ENCODE measurements at regions of chr13 and their contacts with region 1.

Region 1: GRCh38 chr13:25574437-25575411 is 202.9 kb downstream of the ATP8A2 start:
- DNase-seq: no peak
- ATAC-seq: no peak
- H3K4me3 Mint-ChIP-seq: no peak overlapping the region
- H3K27ac Mint-ChIP-seq: no peak overlapping the region
- H3K4me1 Mint-ChIP-seq: no peaks in the 10 kb centered on the region
- H3K27me3 Mint-ChIP-seq: peaks cover 4% of the 10 kb centered on the region
- CTCF ChIP-seq: no peak

Region 2: DNA sequence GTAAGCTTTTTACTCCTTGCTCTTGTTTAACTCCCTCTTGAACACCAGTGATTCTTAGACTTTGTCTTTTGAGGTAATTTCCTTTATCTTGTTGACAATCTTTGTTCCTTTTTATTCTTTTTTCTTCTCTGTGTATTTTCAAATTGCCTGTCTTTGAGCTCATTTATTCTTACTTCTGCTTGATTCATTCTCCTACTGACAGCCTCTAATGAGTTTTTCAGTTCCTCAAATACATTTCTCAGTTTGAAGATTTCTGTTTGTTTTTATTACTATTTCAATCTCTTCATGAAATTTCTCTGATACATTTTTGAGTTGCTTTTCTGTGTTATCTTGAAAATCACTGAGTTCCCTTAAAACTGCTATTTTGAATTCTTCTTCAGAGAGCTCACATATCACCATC is 48.8 kb before region 1 on chr13:
- CTCF ChIA-PET with region 1: no interaction called
- POLR2A ChIA-PET with region 1: no interaction called
- intact Hi-C with region 1: no loop called
- DNase-seq: no peak
- ATAC-seq: no peak
- H3K4me3 Mint-ChIP-seq: no peak overlapping the region
- H3K27ac Mint-ChIP-seq: no peak overlapping the region
- H3K4me1 Mint-ChIP-seq: no peaks in the 10 kb centered on the region
- H3K27me3 Mint-ChIP-seq: peaks cover 2% of the 10 kb centered on the region
- CTCF ChIP-seq: no peak

Region 3: DNA sequence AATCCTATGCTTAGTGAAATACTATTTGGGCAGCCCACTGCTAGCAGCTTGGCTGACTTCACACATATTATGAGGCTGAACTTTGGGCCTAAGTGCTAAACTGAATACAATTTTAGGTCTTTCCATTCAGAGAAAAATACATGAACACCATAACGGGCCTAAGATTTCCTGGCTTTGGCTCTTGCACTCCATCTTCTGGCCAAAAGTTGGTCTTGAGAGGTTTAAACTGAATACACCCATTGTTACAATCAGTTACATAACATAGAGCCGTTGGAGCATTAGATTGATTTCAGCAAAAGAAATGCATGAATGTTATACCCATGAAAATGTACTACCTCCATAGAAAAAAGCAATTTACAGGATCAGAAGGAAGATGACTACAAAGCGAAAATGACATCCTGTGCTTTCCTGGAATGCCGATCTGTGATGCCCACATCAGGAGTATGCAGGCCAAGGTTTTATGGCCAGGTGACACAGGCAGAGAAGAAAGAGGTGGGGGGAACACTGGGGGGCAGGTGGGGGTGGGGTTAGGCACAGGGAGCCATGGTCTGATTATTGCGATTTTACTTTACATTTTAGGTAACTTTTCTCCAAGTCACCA is 488.2 kb after region 1 on chr13:
- CTCF ChIA-PET with region 1: interaction called, 3 read pairs
- POLR2A ChIA-PET with region 1: no interaction called
- intact Hi-C with region 1: loop called (anchors 2 kb)
- DNase-seq: no peak
- ATAC-seq: no peak
- H3K4me3 Mint-ChIP-seq: no peak overlapping the region
- H3K27ac Mint-ChIP-seq: no peak overlapping the region
- H3K4me1 Mint-ChIP-seq: no peaks in the 10 kb centered on the region
- H3K27me3 Mint-ChIP-seq: peaks cover 21% of the 10 kb centered on the region
- CTCF ChIP-seq: no peak

Region 4: DNA sequence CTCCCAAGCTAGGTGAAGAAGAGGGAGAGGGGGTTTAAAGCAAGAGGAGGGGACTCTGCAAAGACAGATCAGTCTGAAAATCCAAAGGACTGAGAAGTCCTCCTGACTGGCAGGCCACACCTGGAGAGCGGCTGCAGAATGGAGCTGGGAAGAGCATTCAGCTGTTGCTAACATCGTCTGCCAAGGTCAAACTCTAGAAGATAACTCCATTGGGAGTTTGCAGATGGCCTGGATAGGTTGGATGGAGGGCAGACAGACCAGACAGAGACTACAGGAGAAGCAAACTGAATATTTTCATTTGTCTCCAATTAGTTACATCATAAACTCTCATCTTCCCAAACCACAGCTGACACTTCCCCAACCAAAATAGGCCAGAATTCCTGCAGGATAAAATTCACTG is 497.0 kb after region 1 on chr13:
- CTCF ChIA-PET with region 1: interaction called, 4 read pairs
- POLR2A ChIA-PET with region 1: no interaction called
- intact Hi-C with region 1: loop called (anchors 2 kb)
- DNase-seq: no peak
- ATAC-seq: no peak
- H3K4me3 Mint-ChIP-seq: no peak overlapping the region
- H3K27ac Mint-ChIP-seq: no peak overlapping the region
- H3K4me1 Mint-ChIP-seq: no peaks in the 10 kb centered on the region
- H3K27me3 Mint-ChIP-seq: peaks cover 21% of the 10 kb centered on the region
- CTCF ChIP-seq: no peak

Region 5: GRCh38 chr13:26498656-26499591 is 924.2 kb after region 1 on chr13:
- CTCF ChIA-PET with region 1: interaction called, 4 read pairs
- POLR2A ChIA-PET with region 1: no interaction called
- intact Hi-C with region 1: loop called (anchors 1 kb)
- DNase-seq: no peak
- ATAC-seq: no peak
- H3K4me3 Mint-ChIP-seq: no peak overlapping the region
- H3K27ac Mint-ChIP-seq: no peak overlapping the region
- H3K4me1 Mint-ChIP-seq: no peaks in the 10 kb centered on the region
- H3K27me3 Mint-ChIP-seq: peaks cover 4% of the 10 kb centered on the region
- CTCF ChIP-seq: no peak

Region 6: DNA sequence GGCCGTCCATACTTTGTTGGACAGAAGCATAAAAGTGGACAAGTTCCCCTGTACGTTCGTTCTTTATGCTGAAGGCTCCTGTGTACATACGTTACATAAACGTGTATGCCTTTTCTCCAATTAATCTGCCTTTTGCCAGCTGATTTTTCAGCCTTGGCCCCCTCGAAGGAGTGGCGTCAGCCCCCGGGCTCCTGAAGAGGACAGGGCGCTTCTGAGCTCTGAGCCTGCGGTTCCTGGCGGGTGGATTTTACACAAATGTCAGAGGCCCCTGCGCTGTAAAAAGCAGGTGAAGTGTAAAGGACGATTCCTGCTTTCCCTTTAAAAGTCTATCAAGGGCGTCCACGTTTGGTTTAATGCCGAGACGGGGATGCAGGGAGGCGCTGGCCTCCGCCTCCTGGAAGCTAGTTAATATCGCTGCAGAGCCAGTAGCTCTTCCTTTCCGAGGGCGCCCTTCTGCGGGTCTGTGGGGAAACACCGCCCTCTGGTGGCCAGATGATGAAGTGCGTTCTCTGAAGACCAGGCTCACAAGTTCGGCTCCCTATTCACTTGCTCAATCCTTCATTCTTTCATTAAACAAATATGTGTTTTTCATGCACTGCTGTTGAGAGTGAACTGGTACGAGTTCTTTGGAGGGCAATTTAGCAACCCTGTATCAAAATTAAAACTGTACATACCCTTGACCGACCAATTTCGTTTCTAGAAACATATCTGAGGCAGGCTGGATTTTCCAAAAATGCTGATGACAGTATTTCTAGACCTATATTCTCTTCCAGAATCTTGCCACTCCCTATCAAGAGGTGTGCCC is 1123.9 kb after region 1 on chr13:
- CTCF ChIA-PET with region 1: interaction called, 24 read pairs
- POLR2A ChIA-PET with region 1: no interaction called
- intact Hi-C with region 1: loop called (anchors 1 kb)
- DNase-seq: peak; percentile 72
- ATAC-seq: peak; percentile 87
- H3K4me3 Mint-ChIP-seq: no peak overlapping the region
- H3K27ac Mint-ChIP-seq: no peak overlapping the region
- H3K4me1 Mint-ChIP-seq: peaks cover 4% of the 10 kb centered on the region
- H3K27me3 Mint-ChIP-seq: peaks cover 7% of the 10 kb centered on the region
- CTCF ChIP-seq: peak; percentile 30

Region 7: GRCh38 chr13:26929971-26930730 is 1355.4 kb after region 1 on chr13:
- CTCF ChIA-PET with region 1: no interaction called
- POLR2A ChIA-PET with region 1: no interaction called
- intact Hi-C with region 1: loop called (anchors 1 kb)
- DNase-seq: peak; percentile 60
- ATAC-seq: peak; percentile 64
- H3K4me3 Mint-ChIP-seq: no peak overlapping the region
- H3K27ac Mint-ChIP-seq: no peak overlapping the region
- H3K4me1 Mint-ChIP-seq: no peaks in the 10 kb centered on the region
- H3K27me3 Mint-ChIP-seq: peaks cover 8% of the 10 kb centered on the region
- CTCF ChIP-seq: peak; percentile 95